Cardiac septum (tissue), 1 donor: ENCODE measurements at regions of chr20 and their contacts with region 1.

Region 1: DNA sequence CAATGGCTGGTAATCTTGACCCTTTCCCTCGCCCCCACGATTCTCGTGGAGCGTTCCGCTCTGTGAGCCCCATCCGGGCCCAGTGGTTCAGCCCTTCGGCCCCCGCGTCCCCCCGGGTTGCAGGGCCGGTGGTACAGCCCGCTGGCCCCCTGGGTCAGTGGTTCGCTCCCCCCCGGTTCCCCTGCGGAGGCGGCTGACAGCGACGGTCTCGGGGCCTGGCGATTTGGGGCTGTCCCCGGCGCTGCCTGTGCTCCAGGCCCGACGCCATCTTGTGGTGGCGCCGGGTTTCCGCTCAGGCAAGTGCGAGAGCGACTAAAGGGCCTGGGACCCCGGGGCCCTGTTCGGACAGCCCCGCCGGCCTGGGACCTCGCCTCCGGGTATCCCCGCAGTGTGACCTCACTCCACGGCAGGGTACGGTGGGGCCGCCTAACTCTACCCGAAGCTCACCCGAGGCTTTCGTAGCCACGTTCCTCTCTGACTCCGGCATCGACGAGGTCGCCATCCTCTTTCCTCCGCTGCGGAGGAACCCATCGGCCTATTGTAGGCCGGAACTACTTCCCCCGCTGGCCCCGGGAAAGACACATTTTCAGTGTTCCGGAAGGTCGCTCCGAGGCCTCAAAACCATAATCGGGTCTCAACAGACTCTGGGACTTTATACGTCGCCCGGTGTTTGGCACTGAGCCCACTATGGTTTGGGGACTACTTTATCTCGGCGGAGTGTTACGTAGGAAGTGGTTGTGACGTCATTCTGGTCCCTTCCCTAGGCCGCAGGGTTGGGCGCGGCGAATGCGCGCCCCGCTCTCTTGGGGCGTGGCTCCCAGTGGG is at the start of gene ZNF335:
- DNase-seq: peak; percentile 97
- total RNA-seq, gene ZNF335: 8.5 TPM

Region 2: DNA sequence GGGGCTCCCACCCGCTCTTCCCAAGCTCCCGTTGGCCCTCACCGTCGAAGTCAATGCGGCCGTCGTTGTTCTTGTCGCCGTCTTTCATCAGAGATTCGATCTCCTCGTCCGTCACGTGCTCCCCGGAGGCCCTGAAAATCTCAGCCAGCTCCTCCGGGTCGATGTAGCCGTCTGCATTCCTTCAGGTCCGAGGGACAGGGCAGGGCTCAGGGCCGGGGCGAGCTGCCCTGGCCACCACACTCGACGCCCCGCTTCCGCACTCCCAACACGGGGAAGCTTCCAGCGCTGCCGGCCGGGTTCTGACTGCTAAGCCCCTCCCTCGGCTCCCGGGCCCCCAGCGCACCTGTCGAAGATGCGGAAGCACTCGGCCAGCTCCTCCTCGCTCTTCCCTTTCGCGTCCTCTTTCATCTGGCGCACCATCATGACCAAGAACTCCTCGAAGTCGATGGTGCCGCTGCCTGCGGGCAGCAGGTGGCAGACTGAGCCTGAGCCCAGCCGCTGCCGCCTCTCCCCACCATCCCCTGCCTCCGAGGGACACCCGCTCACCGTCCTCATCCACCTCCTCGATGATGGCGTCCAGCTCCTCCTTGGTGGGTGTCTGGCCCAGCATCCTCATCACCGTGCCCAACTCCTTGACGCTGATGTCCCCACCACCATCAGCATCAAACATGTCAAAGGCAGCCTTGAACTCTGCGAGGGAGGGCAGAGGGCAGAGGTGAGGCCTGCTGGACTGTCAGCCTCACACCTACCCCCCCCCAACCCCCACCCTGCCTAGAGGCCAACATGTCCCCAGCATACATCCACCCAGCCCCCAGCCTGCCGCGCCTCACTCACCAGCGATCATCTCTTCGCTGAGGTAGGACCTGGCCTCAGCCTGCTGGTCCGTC is 147.7 kb before region 1 on chr20:
- intact Hi-C with region 1: loop called (anchors 10 kb)
- DNase-seq: no peak

Region 3: GRCh38 chr20:45880988-45881788 is 90.7 kb before region 1 on chr20 and contains the start of gene ZSWIM1:
- intact Hi-C with region 1: loop called (anchors 2 kb)
- DNase-seq: peak; percentile 100
- total RNA-seq, gene ZSWIM1: 6.9 TPM

Region 4: GRCh38 chr20:45890985-45891983 is 80.6 kb before region 1 on chr20 and contains the starts of genes CTSA and NEURL2:
- intact Hi-C with region 1: loop called (anchors 2 kb)
- DNase-seq: peak; percentile 97
- total RNA-seq, gene CTSA: 111 TPM
- total RNA-seq, gene NEURL2: 7.6 TPM

Region 5: GRCh38 chr20:45934586-45935415 is 37.1 kb before region 1 on chr20 and contains the start of gene PCIF1:
- intact Hi-C with region 1: loop called (anchors 5 kb)
- DNase-seq: peak; percentile 99
- total RNA-seq, gene PCIF1: 30.2 TPM

Region 6: DNA sequence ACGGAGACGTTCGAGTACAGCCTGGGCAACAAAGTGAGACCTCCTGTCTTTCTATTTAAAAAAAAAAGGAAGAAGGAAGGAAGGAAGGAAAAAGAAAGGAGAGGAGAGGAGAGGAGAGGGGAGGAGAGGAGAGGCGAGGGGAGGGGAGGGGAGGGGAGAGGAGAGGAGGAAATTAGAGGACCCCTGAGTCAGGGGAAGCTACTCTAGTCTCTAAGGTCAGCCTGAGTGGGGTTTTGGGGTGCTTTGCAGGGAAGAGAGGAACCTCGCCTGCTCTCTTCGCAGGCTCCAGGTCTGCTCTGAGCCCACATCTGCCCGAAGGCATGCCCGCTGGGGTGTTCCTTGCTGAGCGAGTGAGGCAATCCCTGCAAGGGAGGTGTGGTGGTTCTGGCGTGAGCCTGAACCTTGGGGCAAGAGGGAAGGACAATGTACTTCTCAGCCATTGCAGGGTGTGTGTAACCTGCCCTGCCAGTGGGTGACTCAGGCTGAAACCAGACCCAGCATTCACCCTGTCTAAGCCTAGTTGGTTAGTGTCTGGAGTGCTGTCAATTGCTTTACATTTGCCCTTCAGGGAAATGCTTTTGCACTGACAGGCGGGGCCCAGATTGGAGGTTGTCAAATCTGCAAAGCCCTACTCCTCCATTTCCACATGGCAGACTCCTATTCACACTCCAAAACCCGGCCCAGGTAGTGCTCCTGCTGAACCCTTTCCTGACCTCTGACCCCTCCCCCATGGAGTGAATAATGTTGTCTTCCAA is 21.5 kb after region 1 on chr20:
- intact Hi-C with region 1: no loop called
- DNase-seq: no peak